GM18951 (cell line): ENCODE measurements at regions of chr14 and their contacts with region 1.

Region 1: GRCh38 chr14:50775357-50775756 is 55.6 kb downstream of the NIN start:
- POLR2A ChIP-seq: no peak

Region 2: GRCh38 chr14:50860478-50861086 is 85.2 kb after region 1 on chr14:
- in situ Hi-C with region 1: loop called (anchors 5 kb)
- POLR2A ChIP-seq: no peak

Region 3: DNA sequence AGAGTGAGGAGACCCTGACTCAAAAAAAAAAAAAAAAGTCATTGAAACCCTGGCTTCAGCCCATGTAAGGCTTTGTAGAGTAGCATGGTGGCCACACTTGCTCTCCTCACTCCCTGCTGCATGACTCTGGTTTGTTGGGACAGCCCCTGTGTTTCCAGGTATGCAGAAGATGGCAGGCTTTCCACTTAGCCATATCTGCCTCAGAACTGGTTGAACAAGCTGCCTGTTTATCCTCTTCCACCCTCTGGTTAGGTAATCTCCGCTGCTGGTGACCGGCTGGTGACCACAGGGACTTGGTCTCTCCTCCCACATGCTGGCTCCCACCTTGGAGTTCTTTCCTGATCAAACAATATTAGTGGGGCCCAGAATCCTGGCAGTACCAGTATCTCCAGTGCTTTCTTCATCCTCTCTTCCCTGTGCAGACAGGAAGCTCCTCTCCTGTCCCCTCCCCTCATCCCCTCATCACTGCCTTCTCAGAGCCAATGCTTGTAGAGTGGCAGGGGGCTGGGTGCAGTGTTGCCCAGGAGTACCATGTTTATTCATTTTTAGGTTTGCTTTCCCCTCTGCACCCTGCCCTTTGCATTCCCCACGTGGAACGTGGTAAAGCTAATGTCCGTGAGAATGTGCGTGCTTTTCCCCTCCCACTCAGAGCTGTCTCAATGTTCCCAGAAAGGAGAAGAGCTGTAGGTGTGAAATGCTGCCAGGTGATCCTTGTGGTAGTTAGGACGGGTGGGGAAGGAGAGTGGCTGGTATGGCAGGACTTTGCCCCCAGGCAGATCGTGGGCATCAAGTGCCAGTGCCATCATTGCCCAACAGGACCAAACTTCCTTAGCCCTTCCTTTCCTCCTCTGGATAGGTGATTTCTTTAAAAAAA is 107.8 kb after region 1 on chr14:
- in situ Hi-C with region 1: no loop called
- POLR2A ChIP-seq: no peak

Region 4: GRCh38 chr14:51041108-51041531 is 265.8 kb after region 1 on chr14:
- in situ Hi-C with region 1: no loop called
- POLR2A ChIP-seq: no peak